ENCODE measurements at regions of chr17 and their contacts with region 1.

Region 1: DNA sequence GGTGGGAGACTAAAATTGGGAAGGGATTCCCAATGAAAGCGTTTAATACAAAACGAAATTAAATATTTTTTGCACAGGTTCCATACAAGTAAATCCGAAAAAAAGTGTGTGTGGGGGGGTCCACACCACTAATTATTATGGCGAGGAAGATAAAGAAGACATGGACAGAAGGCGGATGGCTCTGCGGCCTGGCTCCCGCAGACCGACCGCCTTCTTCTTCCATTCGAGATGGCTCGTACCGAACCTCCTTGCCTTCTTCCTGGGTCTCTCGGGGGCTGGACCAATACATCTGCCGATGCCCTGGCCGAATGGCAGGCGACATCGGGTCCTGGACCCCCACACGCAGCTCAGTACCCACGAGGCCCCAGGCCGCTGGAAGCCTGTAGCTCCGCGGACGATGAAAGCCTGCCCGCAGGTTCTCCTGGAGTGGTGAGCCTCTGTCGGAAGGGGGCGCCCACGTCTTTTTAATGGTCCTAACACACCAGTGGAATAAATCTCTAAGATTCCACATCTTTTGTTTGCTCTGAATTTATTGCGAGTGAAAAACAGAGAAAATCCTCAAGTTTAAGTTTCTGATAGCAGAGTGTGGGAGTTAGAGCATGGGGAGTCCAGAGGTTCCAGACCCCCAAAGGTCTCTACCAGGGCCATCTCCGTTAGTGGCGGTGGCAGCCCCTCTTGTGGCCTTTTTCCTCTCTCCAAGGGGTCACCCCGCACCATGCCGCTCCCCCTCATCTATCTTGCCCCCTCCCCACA is 1.4 kb downstream of the PRAC2 start:
- DNase-seq: peak; percentile 84
- H3K4me3 Mint-ChIP-seq: peak overlapping the region; percentile 26
- H3K27ac Mint-ChIP-seq: peak overlapping the region; percentile 47
- H3K4me1 Mint-ChIP-seq: peaks cover 28% of the 10 kb centered on the region
- H3K27me3 Mint-ChIP-seq: peaks cover 96% of the 10 kb centered on the region

Region 2: DNA sequence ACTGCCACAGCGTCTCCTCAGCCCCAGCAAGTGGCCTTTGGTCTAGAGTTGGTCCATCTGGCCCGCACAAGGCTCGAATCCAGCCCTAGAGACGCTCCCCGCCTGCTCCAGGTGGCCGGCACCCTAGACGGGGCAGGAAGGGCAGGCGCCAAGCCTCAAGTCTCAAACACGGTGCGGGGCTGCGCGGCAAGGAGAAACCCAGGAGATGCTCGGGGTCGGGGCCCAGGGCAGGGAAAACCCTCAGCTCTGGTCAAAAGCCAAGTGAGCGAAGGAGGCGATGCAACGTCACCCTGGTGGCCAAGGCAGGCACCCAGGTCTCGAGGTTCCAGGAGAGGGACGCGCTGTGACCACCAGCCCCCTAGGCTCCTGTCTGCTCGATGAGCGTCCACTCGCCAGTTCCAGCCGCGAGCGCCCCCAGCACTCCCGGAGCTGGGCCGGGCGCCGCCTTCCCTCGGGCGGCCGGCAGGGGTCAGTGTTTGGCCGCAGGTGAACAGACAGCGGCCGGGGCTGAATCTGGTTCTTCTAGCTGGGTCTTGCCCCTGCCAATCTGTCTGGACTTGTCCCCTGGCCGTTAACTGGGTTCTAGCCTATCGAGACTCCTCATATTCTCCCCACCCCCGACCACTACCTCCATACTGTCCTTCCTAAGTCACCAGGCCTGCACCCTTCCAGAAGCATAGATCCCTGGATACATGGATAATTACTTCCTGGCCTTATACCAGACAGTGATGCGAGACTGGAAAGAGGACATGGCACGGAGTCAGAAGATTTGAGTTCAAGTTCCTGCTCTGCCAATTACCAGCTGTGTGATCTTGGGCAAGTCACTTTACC is 46.1 kb before region 1 on chr17:
- CTCF ChIA-PET with region 1: interaction called, 15 read pairs
- POLR2A ChIA-PET with region 1: no interaction called
- DNase-seq: peak; percentile 67
- H3K4me3 Mint-ChIP-seq: no peak overlapping the region
- H3K27ac Mint-ChIP-seq: no peak overlapping the region
- H3K4me1 Mint-ChIP-seq: peaks cover 4% of the 10 kb centered on the region
- H3K27me3 Mint-ChIP-seq: peaks cover 60% of the 10 kb centered on the region

Region 3: GRCh38 chr17:48745381-48746275 is 21.2 kb after region 1 on chr17:
- CTCF ChIA-PET with region 1: interaction called, 24 read pairs
- POLR2A ChIA-PET with region 1: no interaction called
- DNase-seq: no peak
- H3K4me3 Mint-ChIP-seq: no peak overlapping the region
- H3K27ac Mint-ChIP-seq: no peak overlapping the region
- H3K4me1 Mint-ChIP-seq: peaks cover 2% of the 10 kb centered on the region
- H3K27me3 Mint-ChIP-seq: peaks cover 94% of the 10 kb centered on the region

Region 4: DNA sequence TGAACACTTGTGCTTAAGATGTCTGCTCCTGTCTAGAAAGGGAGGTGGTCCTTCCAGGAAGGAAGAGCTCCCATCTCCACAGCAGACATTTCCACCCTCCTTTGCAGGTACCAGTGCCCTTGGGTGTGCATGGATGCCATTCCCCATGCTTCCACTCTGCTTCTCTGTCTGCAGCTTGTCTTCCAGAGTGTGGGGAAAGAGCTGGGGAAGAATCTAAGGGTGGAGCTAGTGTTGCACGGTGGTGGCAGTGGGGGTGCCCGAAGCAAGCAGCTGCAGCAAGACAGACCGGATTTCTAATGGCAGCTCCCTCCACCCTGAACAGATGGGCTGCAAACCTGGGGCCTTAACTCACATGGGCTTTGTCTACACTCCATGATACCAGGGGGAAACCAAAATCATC is 26.7 kb after region 1 on chr17:
- CTCF ChIA-PET with region 1: interaction called, 24 read pairs
- POLR2A ChIA-PET with region 1: no interaction called
- DNase-seq: no peak
- H3K4me3 Mint-ChIP-seq: no peak overlapping the region
- H3K27ac Mint-ChIP-seq: no peak overlapping the region
- H3K4me1 Mint-ChIP-seq: peaks cover under 1% of the 10 kb centered on the region
- H3K27me3 Mint-ChIP-seq: peaks cover 92% of the 10 kb centered on the region

Region 5: GRCh38 chr17:48756830-48757251 is 32.4 kb after region 1 on chr17:
- CTCF ChIA-PET with region 1: interaction called, 24 read pairs
- POLR2A ChIA-PET with region 1: no interaction called
- DNase-seq: no peak
- H3K4me3 Mint-ChIP-seq: no peak overlapping the region
- H3K27ac Mint-ChIP-seq: peak overlapping the region; percentile 20
- H3K4me1 Mint-ChIP-seq: no peaks in the 10 kb centered on the region
- H3K27me3 Mint-ChIP-seq: peaks cover 84% of the 10 kb centered on the region